Heart left ventricle (tissue), 16 donors: ENCODE measurements at regions of chr5 and their contacts with region 1.

Region 1: DNA sequence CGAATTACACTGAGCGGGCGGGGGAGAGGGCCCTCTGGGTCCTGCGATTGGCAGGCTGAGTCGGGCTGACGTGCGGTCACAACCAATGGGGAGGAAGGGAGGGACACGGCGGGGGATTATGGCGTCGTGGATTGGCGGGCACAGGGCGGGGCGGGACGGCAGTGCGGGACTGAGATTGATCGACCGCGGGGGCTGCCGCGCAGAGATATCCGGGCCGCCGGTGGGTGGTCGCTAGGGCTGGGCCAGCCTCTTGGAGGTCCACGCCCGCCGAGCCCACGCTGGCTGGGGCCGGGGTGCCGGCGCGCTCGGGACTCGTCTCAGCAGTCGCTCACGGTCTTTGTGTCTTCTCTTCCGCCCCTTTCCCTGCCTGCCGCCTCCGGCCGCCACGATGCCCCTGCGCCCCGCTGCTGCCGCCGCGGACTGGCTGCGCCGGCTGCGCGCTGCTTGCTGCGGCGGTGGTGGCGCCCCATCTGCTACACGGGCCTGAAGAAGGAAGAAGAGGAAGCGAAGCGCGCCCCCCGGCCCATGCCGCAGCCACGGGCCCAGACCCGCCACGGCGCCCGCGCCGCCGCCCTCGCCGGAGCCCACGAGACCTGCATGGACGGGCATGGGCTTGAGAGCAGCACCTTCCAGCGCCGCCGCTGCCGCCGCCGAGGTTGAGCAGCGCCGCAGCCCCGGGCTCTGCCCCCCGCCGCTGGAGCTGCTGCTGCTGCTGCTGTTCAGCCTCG is at the start of gene RGMB:
- DNase-seq: peak; percentile 97 to 99 (median 99)
- ATAC-seq: peak; percentile 96 to 99 (median 98)
- H3K4me3 ChIP-seq: peak within 1 kb of the TSS; percentile 80 to 94 (median 88)
- H3K27ac ChIP-seq: peak within 1 kb of the TSS; percentile 76 to 97 (median 90)
- H3K4me1 ChIP-seq: peaks cover 3 to 75% (median 29%) of the 10 kb centered on the region in 12 donors
- H3K27me3 ChIP-seq: peaks cover 0 to 56% (median 0%) of the 10 kb centered on the region in 9 donors
- CTCF ChIP-seq: peak in 1 of 12 donors; percentile 10
- POLR2A ChIP-seq: peak; percentile 68 to 93
- total RNA-seq, gene RGMB: 11.0 to 42.2 (median 17.0) TPM

Region 2: GRCh38 chr5:97183100-97183929 is 1590.3 kb before region 1 on chr5 and contains the start of gene RIOK2:
- intact Hi-C with region 1: loop called in 2 of 10 experiments (anchors 5 kb)
- DNase-seq: peak; percentile 93 to 96 (median 96)
- ATAC-seq: peak; percentile 96 to 98 (median 97)
- H3K4me3 ChIP-seq: peak within 1 kb of the TSS; percentile 48 to 97 (median 78)
- H3K27ac ChIP-seq: peak within 1 kb of the TSS; percentile 88 to 94 (median 91)
- H3K4me1 ChIP-seq: peaks cover 0 to 32% (median 20%) of the 10 kb centered on the region in 12 donors
- H3K27me3 ChIP-seq: no peaks in the 10 kb centered on the region
- CTCF ChIP-seq: no peak
- POLR2A ChIP-seq: peak in 1 of 2 donors; percentile 56
- total RNA-seq, gene RIOK2: 8.2 to 23.6 (median 16.9) TPM

Region 3: GRCh38 chr5:97838214-97838613 is 935.4 kb before region 1 on chr5:
- intact Hi-C with region 1: loop called in 1 of 10 experiments (anchors 10 kb)
- DNase-seq: no peak
- ATAC-seq: peak; percentile 37 to 95 (median 85)
- H3K4me3 ChIP-seq: no peak overlapping the region
- H3K27ac ChIP-seq: peak overlapping the region in 3 of 12 donors; percentile 8 to 35 (median 33)
- H3K4me1 ChIP-seq: peaks cover 0 to 39% (median 13%) of the 10 kb centered on the region in 12 donors
- H3K27me3 ChIP-seq: no peaks in the 10 kb centered on the region
- CTCF ChIP-seq: no peak
- POLR2A ChIP-seq: no peak

Region 4: DNA sequence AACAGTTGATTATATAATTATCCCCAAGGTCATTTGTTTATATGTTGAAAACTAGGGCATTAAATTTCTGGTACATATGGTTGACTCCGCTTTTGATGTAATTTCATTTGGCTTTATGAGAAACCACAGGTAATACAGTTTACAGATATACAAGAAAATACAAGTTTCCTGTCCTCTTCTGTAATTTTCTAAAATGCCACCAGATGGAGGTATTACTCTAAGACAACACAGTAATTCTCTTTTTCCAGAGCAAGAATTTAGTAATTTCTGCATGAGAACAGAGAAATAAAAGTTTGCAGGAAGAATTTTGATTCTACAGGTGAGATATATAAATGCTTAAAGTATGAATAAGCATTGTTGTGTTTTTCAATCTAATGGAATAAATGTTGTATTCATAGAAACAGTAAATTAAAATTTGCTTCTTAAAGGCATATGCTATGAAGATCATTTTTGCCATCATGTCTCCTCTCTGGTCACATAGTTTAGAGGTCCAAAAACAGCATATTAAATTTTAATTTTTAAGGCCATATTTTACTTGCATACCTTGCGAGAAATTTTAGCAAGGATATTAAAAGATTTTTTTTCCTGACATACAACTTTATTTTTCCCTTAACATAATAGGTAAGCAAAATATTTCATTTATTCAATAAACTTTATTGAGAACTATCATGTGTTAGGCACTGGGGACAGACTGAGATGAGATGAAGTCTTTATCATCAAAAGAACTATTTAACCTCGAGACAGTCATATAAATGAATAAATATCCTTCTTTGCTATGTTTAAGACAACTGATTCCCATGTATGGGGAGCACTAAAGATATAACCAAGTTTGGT is 132.4 kb after region 1 on chr5:
- intact Hi-C with region 1: no loop called
- DNase-seq: no peak
- ATAC-seq: peak in 1 of 4 donors; percentile 49
- H3K4me3 ChIP-seq: no peak overlapping the region
- H3K27ac ChIP-seq: no peak overlapping the region
- H3K4me1 ChIP-seq: peaks cover 0 to 34% (median 8%) of the 10 kb centered on the region in 12 donors
- H3K27me3 ChIP-seq: no peaks in the 10 kb centered on the region
- CTCF ChIP-seq: peak; percentile 65 to 85 (median 74)
- POLR2A ChIP-seq: no peak

Region 5: GRCh38 chr5:98928873-98929696 is 155.5 kb after region 1 on chr5 and contains the start of gene CHD1:
- intact Hi-C with region 1: loop called in 1 of 10 experiments (anchors 5 kb)
- DNase-seq: peak; percentile 96 to 98 (median 97)
- ATAC-seq: peak; percentile 91 to 94 (median 92)
- H3K4me3 ChIP-seq: peak within 1 kb of the TSS; percentile 70 to 98 (median 86)
- H3K27ac ChIP-seq: peak within 1 kb of the TSS; percentile 98 to 100 (median 100)
- H3K4me1 ChIP-seq: peaks cover 5 to 64% (median 37%) of the 10 kb centered on the region in 12 donors
- H3K27me3 ChIP-seq: no peaks in the 10 kb centered on the region
- CTCF ChIP-seq: peak in 1 of 12 donors; percentile 9
- POLR2A ChIP-seq: peak; percentile 81 to 91
- total RNA-seq, gene CHD1: 10.5 to 24.0 (median 13.8) TPM

Region 6: DNA sequence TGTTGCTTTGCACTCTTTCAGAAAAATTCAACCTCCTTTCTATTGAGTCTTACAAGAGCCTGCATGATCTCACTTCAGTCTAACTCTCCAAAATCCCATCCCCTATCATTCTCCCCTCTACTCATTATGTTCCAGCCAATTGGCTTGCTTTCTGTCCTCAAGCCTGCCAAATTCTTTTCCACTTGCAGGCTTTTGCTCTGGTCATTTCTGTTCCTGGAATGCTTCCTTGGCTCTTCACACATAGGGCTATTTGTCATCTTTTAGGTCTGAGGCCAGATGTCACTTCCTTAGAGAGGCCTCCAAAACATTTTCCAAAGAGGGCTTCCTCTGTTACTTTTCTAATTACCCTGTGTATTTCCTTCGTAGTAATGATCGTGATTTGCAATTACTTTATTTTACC is 167.0 kb after region 1 on chr5:
- intact Hi-C with region 1: loop called in 1 of 10 experiments (anchors 10 kb)
- DNase-seq: peak in 1 of 5 donors; percentile 23
- ATAC-seq: peak in 3 of 4 donors; percentile 47 to 62 (median 51)
- H3K4me3 ChIP-seq: no peak overlapping the region
- H3K27ac ChIP-seq: peak overlapping the region in 11 of 12 donors; percentile 7 to 82 (median 26)
- H3K4me1 ChIP-seq: peaks cover 7 to 64% (median 49%) of the 10 kb centered on the region in 12 donors
- H3K27me3 ChIP-seq: no peaks in the 10 kb centered on the region
- CTCF ChIP-seq: no peak
- POLR2A ChIP-seq: no peak

Region 7: GRCh38 chr5:99032234-99033013 is 258.8 kb after region 1 on chr5:
- intact Hi-C with region 1: loop called in 2 of 10 experiments (anchors 5 to 10 kb)
- DNase-seq: peak in 4 of 5 donors; percentile 43 to 64 (median 50)
- ATAC-seq: peak; percentile 73 to 92 (median 84)
- H3K4me3 ChIP-seq: peak overlapping the region in 9 of 12 donors; percentile 26 to 54 (median 41)
- H3K27ac ChIP-seq: peak overlapping the region in 11 of 12 donors; percentile 26 to 83 (median 63)
- H3K4me1 ChIP-seq: peaks cover 0 to 62% (median 6%) of the 10 kb centered on the region in 12 donors
- H3K27me3 ChIP-seq: no peaks in the 10 kb centered on the region
- CTCF ChIP-seq: peak; percentile 59 to 95 (median 82)
- POLR2A ChIP-seq: no peak